CD8-positive, alpha-beta T cell (primary cell): ENCODE measurements at regions of chr2 and their contacts with region 1.

Region 1: GRCh38 chr2:134118279-134119116 is 135.4 kb upstream of the MGAT5 start:
- DNase-seq: peak; percentile 67 to 90 (median 85)
- ATAC-seq: peak; percentile 22
- H3K4me3 ChIP-seq: no peak overlapping the region
- H3K4me3 Mint-ChIP-seq: peak overlapping the region; percentile 99
- H3K27ac ChIP-seq: no peak overlapping the region
- H3K27ac Mint-ChIP-seq: peak overlapping the region; percentile 1
- H3K4me1 ChIP-seq: peaks cover 34% of the 10 kb centered on the region
- H3K4me1 Mint-ChIP-seq: peaks cover 35% of the 10 kb centered on the region
- H3K27me3 ChIP-seq: no peaks in the 10 kb centered on the region
- H3K27me3 Mint-ChIP-seq: no peaks in the 10 kb centered on the region
- CTCF ChIP-seq: peak; percentile 85

Region 2: GRCh38 chr2:133362061-133362476 is 756.4 kb before region 1 on chr2:
- CTCF ChIA-PET with region 1: no interaction called
- POLR2A ChIA-PET with region 1: no interaction called
- intact Hi-C with region 1: no loop called
- DNase-seq: no peak
- ATAC-seq: no peak
- H3K4me3 ChIP-seq: no peak overlapping the region
- H3K4me3 Mint-ChIP-seq: no peak overlapping the region
- H3K27ac ChIP-seq: no peak overlapping the region
- H3K27ac Mint-ChIP-seq: no peak overlapping the region
- H3K4me1 ChIP-seq: no peaks in the 10 kb centered on the region
- H3K4me1 Mint-ChIP-seq: no peaks in the 10 kb centered on the region
- H3K27me3 ChIP-seq: no peaks in the 10 kb centered on the region
- H3K27me3 Mint-ChIP-seq: no peaks in the 10 kb centered on the region
- CTCF ChIP-seq: no peak

Region 3: GRCh38 chr2:134181210-134181609 is 62.7 kb after region 1 on chr2:
- CTCF ChIA-PET with region 1: interaction called, 13 read pairs
- POLR2A ChIA-PET with region 1: interaction called, 13 read pairs
- intact Hi-C with region 1: loop called in 1 of 2 experiments (anchors 2 kb)
- DNase-seq: peak; percentile 19 to 83 (median 58)
- ATAC-seq: peak; percentile 82
- H3K4me3 ChIP-seq: no peak overlapping the region
- H3K4me3 Mint-ChIP-seq: peak overlapping the region; percentile 49
- H3K27ac ChIP-seq: peak overlapping the region; percentile 17 to 55
- H3K27ac Mint-ChIP-seq: peak overlapping the region; percentile 88
- H3K4me1 ChIP-seq: peaks cover 70% of the 10 kb centered on the region
- H3K4me1 Mint-ChIP-seq: peaks cover 91% of the 10 kb centered on the region
- H3K27me3 ChIP-seq: no peaks in the 10 kb centered on the region
- H3K27me3 Mint-ChIP-seq: no peaks in the 10 kb centered on the region
- CTCF ChIP-seq: no peak

Region 4: DNA sequence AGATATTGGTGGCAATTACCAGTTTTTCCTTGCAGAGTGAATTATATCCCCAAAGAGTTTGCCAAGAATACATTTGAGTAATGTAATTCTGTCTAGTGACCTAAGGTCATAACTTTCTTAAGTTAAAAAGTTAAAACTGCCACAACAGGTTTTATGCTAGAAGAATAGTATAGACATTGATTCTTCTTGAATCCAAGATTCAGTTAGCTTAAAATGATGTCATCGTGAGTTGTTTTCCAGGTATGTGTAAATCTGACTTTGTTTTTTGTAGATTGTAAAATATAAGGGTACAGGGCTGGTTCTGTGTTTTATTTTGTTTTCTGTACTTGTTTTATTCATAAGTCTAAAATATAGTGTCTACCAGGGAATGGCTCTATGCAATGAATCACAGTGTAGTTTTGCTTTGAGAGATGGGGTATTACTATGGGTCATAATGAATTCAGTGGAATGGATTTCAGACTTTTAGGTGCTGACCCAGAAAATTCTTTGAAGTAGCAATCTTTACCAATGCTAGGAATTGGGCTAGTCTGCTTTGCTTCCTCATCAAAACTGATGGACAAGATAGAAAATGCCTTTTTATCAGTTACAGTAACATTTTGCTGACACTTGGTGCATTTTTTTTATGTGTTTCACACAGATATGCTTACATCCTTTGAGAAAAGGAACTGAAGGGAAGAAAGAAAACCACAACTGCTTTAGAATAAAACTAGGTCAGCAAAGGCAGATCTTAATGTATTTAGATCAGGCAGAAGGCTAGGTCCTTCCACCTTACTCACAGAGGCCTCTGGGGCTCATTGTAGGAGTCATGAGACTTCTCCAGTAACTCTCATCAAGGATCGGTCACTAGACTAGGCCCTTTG is 114.6 kb after region 1 on chr2:
- CTCF ChIA-PET with region 1: interaction called, 14 read pairs
- POLR2A ChIA-PET with region 1: interaction called, 7 read pairs
- intact Hi-C with region 1: no loop called
- DNase-seq: peak in 2 of 9 experiments; percentile 47 to 68
- ATAC-seq: peak; percentile 71
- H3K4me3 ChIP-seq: peak overlapping the region in 1 of 2 experiments; percentile 3
- H3K4me3 Mint-ChIP-seq: peak overlapping the region; percentile 67
- H3K27ac ChIP-seq: peak overlapping the region; percentile 19 to 73
- H3K27ac Mint-ChIP-seq: peak overlapping the region; percentile 92
- H3K4me1 ChIP-seq: peaks cover 58% of the 10 kb centered on the region
- H3K4me1 Mint-ChIP-seq: peaks cover 80% of the 10 kb centered on the region
- H3K27me3 ChIP-seq: no peaks in the 10 kb centered on the region
- H3K27me3 Mint-ChIP-seq: no peaks in the 10 kb centered on the region
- CTCF ChIP-seq: peak; percentile 24

Region 5: DNA sequence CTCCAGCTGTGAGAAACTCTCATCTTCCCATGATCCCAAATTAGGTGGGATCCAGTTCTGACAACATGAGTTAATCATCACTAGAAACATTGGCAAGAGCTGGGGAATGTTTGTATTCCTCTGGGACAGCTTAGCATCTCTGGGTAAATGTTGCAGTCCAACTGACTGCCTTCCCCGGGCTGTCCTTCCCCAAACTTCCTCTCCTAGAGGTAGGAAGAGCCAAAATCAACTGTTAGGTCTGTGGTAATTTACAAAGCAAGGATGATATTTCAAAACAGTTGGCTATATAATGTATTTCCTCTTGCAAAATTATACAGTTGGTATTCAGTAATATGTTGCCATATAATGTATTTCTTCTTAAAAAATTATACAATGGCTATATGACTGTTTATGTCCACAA is 283.9 kb after region 1 on chr2:
- CTCF ChIA-PET with region 1: interaction called, 16 read pairs
- POLR2A ChIA-PET with region 1: no interaction called
- intact Hi-C with region 1: no loop called
- DNase-seq: no peak
- ATAC-seq: no peak
- H3K4me3 ChIP-seq: no peak overlapping the region
- H3K4me3 Mint-ChIP-seq: no peak overlapping the region
- H3K27ac ChIP-seq: no peak overlapping the region
- H3K27ac Mint-ChIP-seq: peak overlapping the region; percentile 55
- H3K4me1 ChIP-seq: no peaks in the 10 kb centered on the region
- H3K4me1 Mint-ChIP-seq: peaks cover 9% of the 10 kb centered on the region
- H3K27me3 ChIP-seq: no peaks in the 10 kb centered on the region
- H3K27me3 Mint-ChIP-seq: no peaks in the 10 kb centered on the region
- CTCF ChIP-seq: no peak

Region 6: GRCh38 chr2:134668821-134669220 is 550.3 kb after region 1 on chr2:
- CTCF ChIA-PET with region 1: interaction called, 4 read pairs
- POLR2A ChIA-PET with region 1: no interaction called
- intact Hi-C with region 1: loop called in 1 of 2 experiments (anchors 10 kb)
- DNase-seq: peak; percentile 50 to 95 (median 78)
- ATAC-seq: peak; percentile 73
- H3K4me3 ChIP-seq: peak overlapping the region; percentile 0 to 10
- H3K4me3 Mint-ChIP-seq: peak overlapping the region; percentile 42
- H3K27ac ChIP-seq: peak overlapping the region in 1 of 2 experiments; percentile 83
- H3K27ac Mint-ChIP-seq: peak overlapping the region; percentile 82
- H3K4me1 ChIP-seq: peaks cover 60% of the 10 kb centered on the region
- H3K4me1 Mint-ChIP-seq: peaks cover 82% of the 10 kb centered on the region
- H3K27me3 ChIP-seq: no peaks in the 10 kb centered on the region
- H3K27me3 Mint-ChIP-seq: peaks cover 20% of the 10 kb centered on the region
- CTCF ChIP-seq: no peak

Region 7: GRCh38 chr2:135741395-135742324 is 1623.2 kb after region 1 on chr2 and contains the start of gene UBXN4:
- CTCF ChIA-PET with region 1: no interaction called
- POLR2A ChIA-PET with region 1: no interaction called
- intact Hi-C with region 1: loop called in 1 of 2 experiments (anchors 5 kb)
- DNase-seq: peak; percentile 89 to 99 (median 94)
- ATAC-seq: peak; percentile 87
- H3K4me3 ChIP-seq: peak within 1 kb of the TSS; percentile 69 to 96
- H3K4me3 Mint-ChIP-seq: peak within 1 kb of the TSS; percentile 98
- H3K27ac ChIP-seq: peak within 1 kb of the TSS; percentile 89 to 98
- H3K27ac Mint-ChIP-seq: peak within 1 kb of the TSS; percentile 98
- H3K4me1 ChIP-seq: peaks cover 28% of the 10 kb centered on the region
- H3K4me1 Mint-ChIP-seq: peaks cover 43% of the 10 kb centered on the region
- H3K27me3 ChIP-seq: no peaks in the 10 kb centered on the region
- H3K27me3 Mint-ChIP-seq: no peaks in the 10 kb centered on the region
- CTCF ChIP-seq: no peak
- total RNA-seq, gene UBXN4: 157 to 172 TPM